HEK293 (cell line): ENCODE measurements at regions of chr6 and their contacts with region 1.

Region 1: DNA sequence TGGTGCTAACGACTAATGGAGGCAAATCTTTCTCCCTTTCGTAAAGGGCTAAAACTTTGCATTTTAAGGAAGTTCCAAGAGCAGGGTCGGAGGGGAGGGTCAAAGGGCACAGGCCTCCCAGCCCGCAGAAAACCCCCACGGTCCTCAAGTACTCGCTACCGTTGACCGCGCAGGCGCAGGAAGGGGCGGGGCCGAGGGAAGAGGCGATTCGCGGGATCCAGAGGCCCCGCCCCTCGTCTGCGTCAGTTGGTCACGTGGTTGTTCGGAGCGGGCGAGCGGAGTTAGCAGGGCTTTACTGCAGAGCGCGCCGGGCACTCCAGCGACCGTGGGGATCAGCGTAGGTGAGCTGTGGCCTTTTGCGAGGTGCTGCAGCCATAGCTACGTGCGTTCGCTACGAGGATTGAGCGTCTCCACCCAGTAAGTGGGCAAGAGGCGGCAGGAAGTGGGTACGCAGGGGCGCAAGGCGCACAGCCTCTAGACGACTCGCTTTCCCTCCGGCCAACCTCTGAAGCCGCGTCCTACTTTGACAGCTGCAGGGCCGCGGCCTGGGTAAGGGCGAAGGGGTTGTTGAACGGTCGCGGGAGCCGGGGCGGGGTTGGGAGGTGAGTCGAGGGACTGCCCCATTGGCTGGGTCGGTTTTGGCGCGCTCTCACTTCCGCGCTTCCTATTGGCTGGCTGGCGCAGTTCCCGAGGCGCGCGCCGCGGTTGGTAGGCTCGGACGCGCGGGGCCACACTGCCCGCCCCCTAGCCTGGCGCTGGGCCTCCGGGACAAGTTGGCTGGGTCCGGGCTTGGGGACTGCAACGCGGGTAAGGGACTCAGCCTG is at the start of gene GMNN:
- H3K4me3 ChIP-seq: peak within 1 kb of the TSS; percentile 81
- H3K27ac ChIP-seq: peak within 1 kb of the TSS; percentile 97
- H3K4me1 ChIP-seq: peaks cover 10% of the 10 kb centered on the region
- CTCF ChIP-seq: no peak

Region 2: DNA sequence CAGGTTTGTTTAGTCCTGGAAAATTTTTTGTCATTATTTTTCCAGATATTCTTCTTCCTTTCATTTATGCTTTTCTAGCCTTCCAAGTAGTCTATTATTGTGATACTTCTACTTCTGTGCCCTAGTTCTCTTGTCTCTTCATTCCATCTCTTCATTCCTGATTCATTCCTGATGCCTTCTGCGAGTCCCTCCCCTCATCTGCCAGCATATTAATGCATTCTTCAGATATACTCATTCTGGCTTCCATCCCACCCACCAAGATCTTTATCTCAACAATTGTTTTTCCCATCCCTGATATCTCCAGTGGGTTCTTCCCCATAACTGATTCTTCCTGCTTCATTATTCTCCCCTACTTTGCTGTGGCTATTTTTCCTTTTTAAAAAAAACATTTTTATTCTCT is 244.9 kb before region 1 on chr6:
- CTCF ChIA-PET with region 1: no interaction called
- POLR2A ChIA-PET with region 1: no interaction called
- H3K4me3 ChIP-seq: no peak overlapping the region
- H3K27ac ChIP-seq: no peak overlapping the region
- H3K4me1 ChIP-seq: no peaks in the 10 kb centered on the region
- CTCF ChIP-seq: no peak

Region 3: GRCh38 chr6:24720604-24721460 is 54.1 kb before region 1 on chr6:
- CTCF ChIA-PET with region 1: no interaction called
- POLR2A ChIA-PET with region 1: interaction called, 28 read pairs
- H3K4me3 ChIP-seq: peak overlapping the region; percentile 97
- H3K27ac ChIP-seq: peak overlapping the region; percentile 96
- H3K4me1 ChIP-seq: peaks cover 3% of the 10 kb centered on the region
- CTCF ChIP-seq: no peak; the same call in 1 of the 2 replicates

Region 4: GRCh38 chr6:24797596-24798216 is 22.8 kb after region 1 on chr6:
- CTCF ChIA-PET with region 1: no interaction called
- POLR2A ChIA-PET with region 1: no interaction called
- H3K4me3 ChIP-seq: no peak overlapping the region
- H3K27ac ChIP-seq: no peak overlapping the region
- H3K4me1 ChIP-seq: no peaks in the 10 kb centered on the region
- CTCF ChIP-seq: no peak

Region 5: GRCh38 chr6:24861934-24862333 is 87.0 kb after region 1 on chr6:
- CTCF ChIA-PET with region 1: no interaction called
- POLR2A ChIA-PET with region 1: no interaction called
- H3K4me3 ChIP-seq: no peak overlapping the region
- H3K27ac ChIP-seq: no peak overlapping the region
- H3K4me1 ChIP-seq: no peaks in the 10 kb centered on the region
- CTCF ChIP-seq: no peak